ENCODE measurements at regions of chr11 and their contacts with region 1.

Region 1: DNA sequence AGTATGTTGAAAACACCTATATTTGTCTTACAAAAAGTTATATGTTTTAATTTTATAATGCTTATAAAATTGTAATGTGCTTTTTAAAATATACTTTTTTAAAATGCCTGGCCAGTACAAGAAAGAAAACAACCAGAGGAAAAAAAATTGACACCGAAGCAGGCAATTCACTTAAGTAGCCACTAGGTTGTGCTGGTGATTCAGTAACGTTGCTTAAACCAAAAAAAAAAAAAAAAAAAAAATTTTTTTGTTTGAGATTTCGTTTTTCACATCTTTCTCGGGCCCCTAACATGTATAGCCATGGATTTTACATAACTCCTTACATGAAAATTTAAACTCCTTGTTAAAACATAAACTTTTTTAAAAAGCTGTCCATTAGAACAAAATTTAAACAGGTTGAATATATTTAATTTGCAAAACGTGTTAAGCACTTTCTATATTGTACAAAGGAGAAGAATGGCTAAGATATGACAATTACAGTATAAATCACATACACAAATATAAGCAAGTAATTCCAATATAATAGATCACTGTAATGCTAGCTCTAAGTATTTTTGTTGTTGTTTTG is 9.2 kb downstream of the OR8B4 start:
- DNase-seq: no peak
- H3K4me3 Mint-ChIP-seq: no peak overlapping the region
- H3K27ac Mint-ChIP-seq: no peak overlapping the region
- H3K4me1 Mint-ChIP-seq: no peaks in the 10 kb centered on the region
- H3K27me3 Mint-ChIP-seq: peaks cover 8% of the 10 kb centered on the region

Region 2: GRCh38 chr11:124277804-124278203 is 137.6 kb before region 1 on chr11:
- CTCF ChIA-PET with region 1: no interaction called
- POLR2A ChIA-PET with region 1: no interaction called
- intact Hi-C with region 1: no loop called
- DNase-seq: no peak
- H3K4me3 Mint-ChIP-seq: no peak overlapping the region
- H3K27ac Mint-ChIP-seq: no peak overlapping the region
- H3K4me1 Mint-ChIP-seq: no peaks in the 10 kb centered on the region
- H3K27me3 Mint-ChIP-seq: no peaks in the 10 kb centered on the region

Region 3: GRCh38 chr11:124402326-124402922 is 13.0 kb before region 1 on chr11:
- CTCF ChIA-PET with region 1: interaction called, 17 read pairs
- POLR2A ChIA-PET with region 1: no interaction called
- intact Hi-C with region 1: no loop called
- DNase-seq: peak; percentile 71
- H3K4me3 Mint-ChIP-seq: no peak overlapping the region
- H3K27ac Mint-ChIP-seq: no peak overlapping the region
- H3K4me1 Mint-ChIP-seq: peaks cover 2% of the 10 kb centered on the region
- H3K27me3 Mint-ChIP-seq: no peaks in the 10 kb centered on the region

Region 4: DNA sequence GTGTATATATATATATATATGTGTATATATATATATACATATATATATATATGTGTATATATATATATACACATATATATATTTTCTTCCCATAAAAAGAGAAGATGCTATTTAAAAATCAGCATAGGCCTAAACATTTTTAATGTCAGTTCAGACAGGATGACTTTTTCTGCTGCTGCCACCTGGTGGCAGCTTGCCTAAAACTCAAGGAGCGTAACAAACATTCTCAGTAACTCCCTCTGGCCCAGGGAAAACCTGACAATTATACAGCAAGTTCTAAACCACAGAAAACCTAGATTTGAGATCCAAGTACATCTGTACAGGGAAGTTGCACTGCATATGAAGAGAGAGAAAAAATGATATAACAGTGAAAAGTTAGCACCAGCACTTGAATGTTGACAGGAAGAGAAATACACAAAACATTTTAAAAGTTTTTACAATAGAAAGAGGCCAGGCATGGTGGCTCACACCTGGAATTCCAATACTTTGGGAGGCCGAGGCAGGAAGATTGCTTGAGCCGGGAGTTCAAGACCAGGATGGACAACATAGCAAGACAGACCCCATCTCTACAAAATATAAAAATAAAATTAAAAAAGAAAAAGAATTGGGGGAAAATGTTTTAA is 170.9 kb after region 1 on chr11:
- CTCF ChIA-PET with region 1: interaction called, 33 read pairs
- POLR2A ChIA-PET with region 1: no interaction called
- intact Hi-C with region 1: loop called (anchors 1 kb)
- DNase-seq: peak; percentile 57
- H3K4me3 Mint-ChIP-seq: no peak overlapping the region
- H3K27ac Mint-ChIP-seq: no peak overlapping the region
- H3K4me1 Mint-ChIP-seq: no peaks in the 10 kb centered on the region
- H3K27me3 Mint-ChIP-seq: peaks cover 15% of the 10 kb centered on the region

Region 5: GRCh38 chr11:124865921-124866583 is 450.6 kb after region 1 on chr11:
- CTCF ChIA-PET with region 1: no interaction called
- POLR2A ChIA-PET with region 1: no interaction called
- intact Hi-C with region 1: loop called (anchors 10 kb)
- DNase-seq: peak; percentile 68
- H3K4me3 Mint-ChIP-seq: no peak overlapping the region
- H3K27ac Mint-ChIP-seq: no peak overlapping the region
- H3K4me1 Mint-ChIP-seq: peaks cover 36% of the 10 kb centered on the region
- H3K27me3 Mint-ChIP-seq: peaks cover 77% of the 10 kb centered on the region